Adrenal gland (tissue), 19 donors: ENCODE measurements at regions of chr15 and their contacts with region 1.

Region 1: DNA sequence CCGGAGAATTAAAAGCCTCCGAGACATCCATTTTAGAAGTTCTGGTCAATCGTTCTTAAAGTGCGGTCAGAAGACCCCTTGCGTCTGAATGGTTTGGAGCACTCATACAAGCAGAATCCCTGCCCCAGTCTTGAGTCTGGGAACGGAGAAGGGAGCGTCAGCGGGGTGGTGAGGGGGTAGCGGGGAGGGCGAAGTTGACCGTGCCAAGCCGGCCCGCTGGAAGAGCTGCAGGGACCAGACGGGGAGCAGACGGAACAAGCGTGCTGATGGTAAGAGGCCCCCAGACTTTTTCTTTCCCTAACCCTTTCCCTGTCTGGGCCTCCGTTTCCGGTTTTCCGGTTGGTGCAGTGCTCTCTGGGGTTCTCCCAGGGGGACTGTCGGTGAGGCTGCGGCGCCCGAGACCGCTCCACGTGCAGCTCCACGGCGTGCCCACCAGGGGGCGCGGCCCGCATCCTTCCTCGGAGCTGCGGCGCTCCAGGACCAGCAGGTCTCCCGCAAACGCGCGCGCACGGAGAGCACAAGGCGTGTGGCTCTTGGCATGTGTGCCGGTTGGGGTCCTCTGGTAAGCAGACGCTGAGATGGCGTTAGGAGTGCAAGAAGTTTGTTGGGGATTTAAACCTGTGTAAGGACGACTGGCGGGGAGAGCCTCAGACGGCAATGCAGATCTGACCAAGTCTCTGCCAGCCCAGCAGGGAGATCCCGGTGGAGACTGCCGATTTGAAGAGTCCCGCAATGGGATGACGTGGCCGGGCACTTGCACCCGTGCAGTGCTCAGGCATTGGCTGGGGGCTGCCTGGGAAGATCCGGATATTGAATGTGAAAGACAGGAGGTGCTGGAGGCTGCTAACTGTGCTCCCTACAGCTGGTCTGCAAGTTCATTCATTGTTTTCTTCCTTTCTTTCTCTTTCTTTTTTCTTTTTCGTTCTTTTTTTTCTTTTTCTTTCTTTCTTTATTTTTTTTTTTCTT is 19.2 kb upstream of the CORO2B start:
- DNase-seq: peak; percentile 42 to 83 (median 71)
- H3K4me3 ChIP-seq: peak overlapping the region in 1 of 4 donors; percentile 10
- H3K27ac ChIP-seq: peak overlapping the region in 1 of 5 donors; percentile 4
- H3K4me1 ChIP-seq: peaks cover 3% of the 10 kb centered on the region in 2 donors
- H3K27me3 ChIP-seq: peaks cover 4% of the 10 kb centered on the region
- CTCF ChIP-seq: peak; percentile 80 to 95 (median 93)
- POLR2A ChIP-seq: no peak

Region 2: DNA sequence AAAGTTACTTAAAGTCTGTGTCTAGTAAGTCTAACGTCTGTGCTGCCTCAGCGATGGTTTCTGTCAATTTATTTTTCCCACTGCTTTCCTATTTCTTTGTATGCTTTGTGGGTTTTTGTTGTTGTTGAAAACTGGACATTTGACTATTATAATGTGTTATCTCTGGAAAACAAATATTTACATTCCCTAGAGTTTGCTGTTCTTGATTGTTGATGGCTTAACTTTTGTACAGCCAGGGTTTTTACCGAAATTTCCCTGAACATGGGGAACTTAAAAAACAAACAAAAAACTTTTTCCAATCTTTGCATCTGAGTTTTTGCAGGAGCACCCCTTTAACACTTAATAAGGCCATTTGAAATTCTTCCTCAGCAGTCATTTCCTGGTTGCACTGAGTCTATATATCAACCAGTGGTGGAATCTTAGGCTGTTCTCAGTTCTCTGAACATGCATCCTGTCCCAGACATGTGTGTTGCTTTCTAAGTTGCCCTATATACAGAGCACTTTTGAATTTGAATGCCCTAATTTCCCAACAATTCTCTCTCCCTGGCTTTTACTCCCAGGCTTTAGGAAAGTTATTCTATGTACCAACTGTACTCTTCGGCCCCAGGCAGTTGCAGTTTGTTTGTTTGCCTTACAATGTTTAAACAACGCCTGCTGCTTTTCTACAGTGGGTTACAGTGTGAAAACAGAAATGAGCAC is 517.3 kb before region 1 on chr15:
- intact Hi-C with region 1: no loop called
- DNase-seq: no peak
- H3K4me3 ChIP-seq: no peak overlapping the region
- H3K27ac ChIP-seq: no peak overlapping the region
- H3K4me1 ChIP-seq: no peaks in the 10 kb centered on the region
- H3K27me3 ChIP-seq: no peaks in the 10 kb centered on the region
- CTCF ChIP-seq: no peak
- POLR2A ChIP-seq: no peak

Region 3: DNA sequence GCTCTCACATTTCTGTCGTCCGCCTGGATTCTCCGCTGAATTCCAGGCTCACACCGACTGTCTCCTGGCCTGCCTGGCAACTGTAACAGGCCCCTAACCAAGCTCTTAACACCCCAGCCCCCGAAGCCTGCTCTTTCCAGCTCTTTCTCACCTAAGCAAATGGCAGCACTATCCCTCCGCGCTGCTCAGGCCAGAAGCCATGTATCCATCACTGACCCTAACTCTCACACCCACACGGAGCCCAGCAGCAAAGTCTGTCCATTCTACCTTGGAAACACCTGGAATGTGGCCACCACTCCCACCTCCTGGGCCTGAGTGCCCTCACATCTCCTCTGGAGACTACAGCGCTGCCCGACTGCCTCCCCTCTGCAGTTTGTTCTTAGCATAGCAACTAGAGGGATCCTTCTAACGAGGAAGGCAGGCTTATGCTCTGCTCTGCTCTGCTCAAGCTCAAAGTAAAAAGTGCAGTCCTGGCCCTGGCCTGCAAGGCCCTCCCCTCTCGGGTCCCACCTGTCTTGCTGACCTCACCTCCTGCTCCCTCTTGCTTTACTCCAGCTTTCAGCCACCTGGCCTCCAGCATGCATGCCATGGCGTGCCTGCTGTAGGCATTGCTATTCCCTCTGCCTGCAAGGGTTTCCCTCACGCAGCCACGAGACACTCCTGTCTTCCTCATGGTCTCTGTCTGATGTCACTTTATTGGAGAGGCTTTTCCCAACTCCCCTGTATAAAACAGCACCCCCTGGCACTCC is 254.9 kb before region 1 on chr15:
- intact Hi-C with region 1: loop called in 1 of 2 experiments (anchors 10 kb)
- DNase-seq: peak in 4 of 7 donors; percentile 12 to 49 (median 16)
- H3K4me3 ChIP-seq: no peak overlapping the region
- H3K27ac ChIP-seq: no peak overlapping the region
- H3K4me1 ChIP-seq: peaks cover 0 to 18% of the 10 kb centered on the region in 2 donors
- H3K27me3 ChIP-seq: no peaks in the 10 kb centered on the region
- CTCF ChIP-seq: no peak
- POLR2A ChIP-seq: no peak

Region 4: DNA sequence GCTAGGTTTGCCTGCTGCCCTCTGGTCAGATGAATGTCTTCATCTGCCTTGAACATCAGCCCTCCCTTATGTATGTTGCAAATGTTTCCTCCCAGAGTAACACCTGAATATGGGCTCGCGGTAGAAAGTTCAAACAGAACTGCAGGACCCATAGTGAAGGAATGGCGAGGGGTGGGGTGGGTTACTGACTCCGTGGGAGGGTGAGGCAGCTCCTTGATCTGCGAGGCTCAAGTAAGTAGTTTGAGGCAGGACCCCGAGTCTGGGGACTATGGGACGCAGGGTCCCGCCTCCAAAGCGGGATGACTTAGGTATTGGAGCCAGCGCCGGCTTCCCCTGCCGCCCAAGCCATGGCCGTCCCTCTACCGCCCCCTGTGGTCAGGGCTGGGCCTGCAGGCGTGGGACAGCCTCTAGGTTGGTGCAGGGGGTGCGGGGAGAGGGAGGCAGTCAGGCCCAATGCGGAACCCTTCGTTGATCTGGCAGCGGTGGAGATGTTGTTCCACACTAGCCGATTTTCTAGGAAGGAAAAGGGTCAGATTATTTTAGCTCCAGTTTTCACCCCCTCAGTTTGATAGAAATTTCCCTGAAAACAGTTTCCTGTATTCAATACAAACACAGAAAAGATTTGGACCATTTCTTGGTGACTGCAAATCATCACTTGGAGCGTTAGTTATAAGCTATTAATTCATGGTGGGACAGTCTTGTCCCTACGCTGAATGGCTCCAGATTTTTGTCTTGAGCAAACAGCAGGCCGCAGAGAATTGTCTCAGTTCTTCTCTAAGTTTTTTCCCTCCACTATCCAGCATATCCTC is 91.5 kb after region 1 on chr15:
- intact Hi-C with region 1: loop called in 1 of 2 experiments (anchors 5 kb)
- DNase-seq: peak; percentile 40 to 77 (median 60)
- H3K4me3 ChIP-seq: no peak overlapping the region
- H3K27ac ChIP-seq: no peak overlapping the region
- H3K4me1 ChIP-seq: no peaks in the 10 kb centered on the region
- H3K27me3 ChIP-seq: no peaks in the 10 kb centered on the region
- CTCF ChIP-seq: peak; percentile 46 to 75 (median 62)
- POLR2A ChIP-seq: no peak

Region 5: GRCh38 chr15:68672781-68673205 is 113.2 kb after region 1 on chr15:
- intact Hi-C with region 1: loop called (anchors 2 to 5 kb)
- DNase-seq: no peak
- H3K4me3 ChIP-seq: no peak overlapping the region
- H3K27ac ChIP-seq: no peak overlapping the region
- H3K4me1 ChIP-seq: no peaks in the 10 kb centered on the region
- H3K27me3 ChIP-seq: no peaks in the 10 kb centered on the region
- CTCF ChIP-seq: no peak
- POLR2A ChIP-seq: no peak

Region 6: DNA sequence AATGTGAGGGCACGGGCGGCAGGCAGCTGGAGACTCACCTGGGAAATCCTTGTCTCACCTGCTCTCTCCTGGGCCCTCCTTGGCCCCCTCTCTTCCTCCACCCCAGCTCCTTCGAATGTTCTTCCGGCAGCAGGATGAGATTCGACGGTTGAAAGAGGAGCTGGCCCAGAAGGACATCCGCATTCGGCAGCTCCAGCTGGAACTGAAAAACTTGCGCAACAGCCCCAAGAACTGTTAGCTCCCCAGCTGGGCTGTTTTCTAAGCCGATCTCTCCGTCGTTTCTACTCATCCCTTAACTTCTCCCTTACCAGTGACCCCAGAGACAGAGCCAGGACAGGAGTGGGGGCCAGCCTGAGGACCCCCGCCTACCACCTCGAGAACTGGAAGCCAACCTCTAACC is 166.1 kb after region 1 on chr15:
- intact Hi-C with region 1: no loop called
- DNase-seq: peak; percentile 26 to 74 (median 48)
- H3K4me3 ChIP-seq: no peak overlapping the region
- H3K27ac ChIP-seq: no peak overlapping the region
- H3K4me1 ChIP-seq: peaks cover 5 to 7% of the 10 kb centered on the region in 2 donors
- H3K27me3 ChIP-seq: no peaks in the 10 kb centered on the region
- CTCF ChIP-seq: no peak
- POLR2A ChIP-seq: no peak

Region 7: DNA sequence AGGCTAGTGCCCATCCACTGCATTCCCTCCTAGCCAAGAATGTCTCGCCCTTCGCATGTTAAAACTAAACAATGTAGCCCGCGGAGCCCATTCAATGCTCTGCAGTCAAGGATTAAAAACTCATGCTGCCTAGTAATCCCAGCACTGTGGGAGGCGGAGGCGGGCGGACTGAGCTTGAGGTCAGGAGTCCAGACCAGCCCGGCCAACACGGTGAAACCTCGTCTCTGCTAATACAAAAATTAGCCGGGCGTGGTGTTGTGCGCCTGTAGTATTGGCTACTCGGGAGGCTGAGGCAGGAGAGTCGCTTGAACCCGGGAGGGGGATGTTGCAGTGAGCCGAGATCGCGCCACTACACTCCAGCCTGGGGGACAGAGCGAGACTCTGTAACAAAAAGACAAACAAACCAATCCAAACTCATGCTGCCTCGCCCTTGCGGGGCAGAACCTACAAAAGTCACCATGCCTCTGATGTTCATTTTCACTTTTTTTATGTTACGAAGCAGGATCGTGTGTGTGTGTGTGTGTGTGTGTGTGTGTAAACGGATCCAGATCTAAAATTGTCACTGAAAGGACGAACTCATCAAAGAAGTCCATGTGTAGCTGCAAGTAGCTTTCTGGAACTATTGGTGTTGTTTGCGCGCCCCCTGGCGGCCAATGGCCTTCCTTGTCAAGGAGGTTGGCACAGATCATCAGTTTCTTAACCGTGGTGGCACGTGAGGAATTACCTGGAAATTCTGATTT is 315.9 kb after region 1 on chr15:
- intact Hi-C with region 1: loop called (anchors 5 kb)
- DNase-seq: peak; percentile 88 to 97 (median 92)
- H3K4me3 ChIP-seq: peak overlapping the region in 1 of 4 donors; percentile 33
- H3K27ac ChIP-seq: no peak overlapping the region
- H3K4me1 ChIP-seq: no peaks in the 10 kb centered on the region
- H3K27me3 ChIP-seq: no peaks in the 10 kb centered on the region
- CTCF ChIP-seq: peak; percentile 85 to 97 (median 93)
- POLR2A ChIP-seq: no peak

Region 8: GRCh38 chr15:68924866-68925560 is 365.4 kb after region 1 on chr15:
- intact Hi-C with region 1: loop called in 1 of 2 experiments (anchors 10 kb)
- DNase-seq: peak; percentile 66 to 91 (median 77)
- H3K4me3 ChIP-seq: no peak overlapping the region
- H3K27ac ChIP-seq: no peak overlapping the region
- H3K4me1 ChIP-seq: no peaks in the 10 kb centered on the region
- H3K27me3 ChIP-seq: peaks cover under 1% of the 10 kb centered on the region
- CTCF ChIP-seq: peak; percentile 60 to 81 (median 78)
- POLR2A ChIP-seq: no peak